Activated CD8-positive, alpha-beta T cell treated with anti-CD3 and anti-CD28 coated beads for 36 hours (primary cell): ENCODE measurements at regions of chr9 and their contacts with region 1.

Region 1: DNA sequence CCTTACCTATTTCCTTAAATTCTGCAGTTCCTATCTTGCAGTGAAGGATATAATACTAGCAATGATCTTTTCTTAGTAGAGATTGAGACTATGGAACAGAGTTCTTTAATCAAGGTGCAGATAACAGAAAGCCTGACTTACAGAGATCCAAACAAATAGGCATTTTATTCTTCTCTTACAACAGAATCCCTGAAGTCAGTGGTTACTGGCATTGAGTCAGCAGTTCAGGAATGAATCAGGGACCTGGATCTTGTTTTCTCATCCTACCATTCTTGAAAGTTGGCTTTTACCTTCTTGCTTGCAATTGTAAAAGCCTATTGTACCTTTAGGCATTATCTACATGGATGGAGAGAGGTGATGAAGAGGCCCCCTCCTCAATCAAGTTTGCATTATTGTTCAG is 47.5 kb upstream of the TLE4 start:
- DNase-seq: no peak
- ATAC-seq: no peak
- H3K4me3 Mint-ChIP-seq: no peak overlapping the region
- H3K27ac Mint-ChIP-seq: no peak overlapping the region
- H3K4me1 Mint-ChIP-seq: peaks cover 3% of the 10 kb centered on the region
- H3K27me3 Mint-ChIP-seq: no peaks in the 10 kb centered on the region
- CTCF ChIP-seq: no peak

Region 2: GRCh38 chr9:79465156-79465555 is 59.1 kb before region 1 on chr9:
- CTCF ChIA-PET with region 1: no interaction called
- POLR2A ChIA-PET with region 1: no interaction called
- intact Hi-C with region 1: loop called (anchors 10 kb)
- DNase-seq: no peak
- ATAC-seq: no peak
- H3K4me3 Mint-ChIP-seq: no peak overlapping the region
- H3K27ac Mint-ChIP-seq: no peak overlapping the region
- H3K4me1 Mint-ChIP-seq: peaks cover 9% of the 10 kb centered on the region
- H3K27me3 Mint-ChIP-seq: no peaks in the 10 kb centered on the region
- CTCF ChIP-seq: no peak

Region 3: DNA sequence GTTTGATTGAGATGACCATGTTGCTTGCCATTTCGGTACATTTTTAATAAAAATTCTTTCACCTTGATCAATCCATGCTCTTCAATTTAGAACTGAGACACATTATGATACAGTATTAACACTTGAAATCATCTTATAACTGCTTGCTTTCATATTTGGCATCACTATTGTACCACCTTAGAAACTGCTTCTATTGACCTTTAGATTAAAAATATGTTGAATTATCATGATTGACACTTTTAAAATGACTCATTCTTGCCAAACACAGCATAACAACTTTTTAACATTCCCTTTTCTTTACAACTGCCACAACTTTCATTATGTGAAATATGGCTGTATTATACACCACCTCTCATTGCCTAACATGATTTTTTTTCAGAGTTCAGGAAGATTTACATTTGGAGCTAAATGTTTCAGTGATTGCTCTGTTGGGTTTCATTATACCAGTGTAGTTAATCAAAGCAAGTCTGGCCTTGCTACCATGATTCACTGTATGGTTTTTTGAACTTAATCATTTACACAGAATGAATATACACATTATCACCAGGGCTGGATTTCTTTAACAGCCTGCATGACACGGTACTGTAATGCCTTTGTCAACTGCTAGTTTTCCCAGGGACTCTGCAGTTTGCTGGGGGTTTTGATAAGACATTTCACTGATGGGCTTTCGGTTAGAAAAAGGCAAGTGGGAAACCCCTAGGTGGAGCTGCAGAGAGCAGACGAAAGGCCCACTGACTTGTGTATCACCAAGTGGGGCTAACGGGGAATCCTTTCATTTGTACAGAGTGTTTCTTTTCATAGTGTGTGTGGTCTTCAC is 46.1 kb before region 1 on chr9:
- CTCF ChIA-PET with region 1: no interaction called
- POLR2A ChIA-PET with region 1: no interaction called
- intact Hi-C with region 1: no loop called
- DNase-seq: peak; percentile 61
- ATAC-seq: peak; percentile 89
- H3K4me3 Mint-ChIP-seq: no peak overlapping the region
- H3K27ac Mint-ChIP-seq: peak overlapping the region; percentile 72
- H3K4me1 Mint-ChIP-seq: peaks cover 16% of the 10 kb centered on the region
- H3K27me3 Mint-ChIP-seq: no peaks in the 10 kb centered on the region
- CTCF ChIP-seq: peak; percentile 52

Region 4: DNA sequence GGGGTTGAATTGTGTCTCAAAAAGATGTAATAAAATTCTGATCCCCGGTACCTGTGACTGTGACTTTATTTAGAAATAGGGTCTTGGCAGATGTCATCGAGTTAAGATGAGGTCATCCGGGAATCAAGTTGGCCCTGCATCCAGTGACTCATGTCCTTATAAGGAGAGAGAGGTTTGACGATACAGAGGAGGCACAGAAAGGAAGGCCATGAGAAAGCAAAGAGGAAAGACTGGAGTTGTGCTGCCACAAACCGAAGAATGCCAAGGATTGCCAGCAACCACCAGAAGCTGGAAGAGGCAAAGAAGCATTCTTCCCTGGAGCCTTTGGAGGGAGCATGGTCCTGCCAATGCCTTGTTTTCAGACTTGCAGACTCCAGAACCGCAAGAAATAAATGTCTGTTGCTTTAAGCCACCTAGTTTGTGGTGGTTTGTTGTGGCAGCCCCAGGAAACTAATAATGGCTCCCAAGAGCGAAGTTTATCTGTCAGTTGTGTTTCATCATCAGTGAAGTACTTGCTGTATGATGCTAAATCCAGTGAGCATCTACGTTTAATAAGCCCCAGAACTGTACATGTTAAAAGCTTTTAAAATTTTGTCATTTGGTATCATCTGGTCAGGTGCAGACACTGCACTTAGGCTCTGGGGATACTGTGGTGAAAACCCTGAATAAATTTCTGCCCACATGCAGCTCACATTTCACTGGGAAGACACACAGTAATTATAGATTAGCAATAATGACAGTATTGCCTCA is 162.3 kb after region 1 on chr9:
- CTCF ChIA-PET with region 1: no interaction called
- POLR2A ChIA-PET with region 1: no interaction called
- intact Hi-C with region 1: no loop called
- DNase-seq: no peak
- ATAC-seq: peak; percentile 41
- H3K4me3 Mint-ChIP-seq: peak overlapping the region; percentile 52
- H3K27ac Mint-ChIP-seq: peak overlapping the region; percentile 92
- H3K4me1 Mint-ChIP-seq: peaks cover 56% of the 10 kb centered on the region
- H3K27me3 Mint-ChIP-seq: no peaks in the 10 kb centered on the region
- CTCF ChIP-seq: no peak